PC-9 (cell line): ENCODE measurements at regions of chr14 and their contacts with region 1.

Region 1: GRCh38 chr14:32009976-32010863 is 66.9 kb upstream of the ARHGAP5 start:
- DNase-seq: peak; percentile 39 to 93
- H3K4me3 ChIP-seq: no peak overlapping the region
- H3K27ac ChIP-seq: peak overlapping the region; percentile 94
- H3K4me1 ChIP-seq: peaks cover 68% of the 10 kb centered on the region
- H3K27me3 ChIP-seq: no peaks in the 10 kb centered on the region
- CTCF ChIP-seq: no peak

Region 2: DNA sequence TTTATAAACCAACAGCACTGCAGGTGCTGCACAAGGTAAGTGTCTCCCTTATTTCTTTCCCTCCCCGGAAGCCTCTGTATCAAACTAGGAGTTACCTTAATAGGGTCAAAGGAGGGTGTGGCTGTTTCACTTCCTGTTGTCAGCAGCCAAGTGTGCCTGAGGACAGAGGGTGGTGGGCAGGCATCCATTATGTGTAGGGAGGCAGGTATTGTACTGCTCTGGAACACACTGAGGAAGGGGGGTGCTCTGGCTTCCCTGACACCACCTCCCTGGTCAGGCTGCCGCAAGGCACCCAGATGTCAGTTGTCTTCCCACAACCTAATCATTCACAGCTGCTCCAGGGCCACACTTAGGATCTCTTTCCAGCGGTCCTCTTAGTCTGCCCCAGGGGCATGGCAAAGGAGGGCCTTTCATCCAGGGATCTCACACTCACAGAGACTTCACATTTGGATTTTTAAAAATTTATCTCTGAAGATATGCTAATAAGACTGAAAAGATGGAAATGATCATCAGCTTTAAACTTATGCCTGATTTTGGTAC is 65.1 kb before region 1 on chr14:
- CTCF ChIA-PET with region 1: no interaction called
- POLR2A ChIA-PET with region 1: no interaction called
- intact Hi-C with region 1: loop called (anchors 2 kb)
- DNase-seq: no peak
- H3K4me3 ChIP-seq: no peak overlapping the region
- H3K27ac ChIP-seq: no peak overlapping the region
- H3K4me1 ChIP-seq: peaks cover 22% of the 10 kb centered on the region
- H3K27me3 ChIP-seq: no peaks in the 10 kb centered on the region
- CTCF ChIP-seq: no peak